Ovary (tissue), 10 donors: ENCODE measurements at regions of chr1 and their contacts with region 1.

Region 1: GRCh38 chr1:31593770-31594632 is 17.7 kb downstream of the TINAGL1 start:
- DNase-seq: peak; percentile 83 to 92 (median 86)
- H3K4me3 ChIP-seq: no peak overlapping the region
- H3K27ac ChIP-seq: no peak overlapping the region
- H3K4me1 ChIP-seq: no peaks in the 10 kb centered on the region
- H3K27me3 ChIP-seq: no peaks in the 10 kb centered on the region
- CTCF ChIP-seq: peak; percentile 70 to 86 (median 78)
- EP300 ChIP-seq: no peak
- POLR2A ChIP-seq: no peak

Region 2: DNA sequence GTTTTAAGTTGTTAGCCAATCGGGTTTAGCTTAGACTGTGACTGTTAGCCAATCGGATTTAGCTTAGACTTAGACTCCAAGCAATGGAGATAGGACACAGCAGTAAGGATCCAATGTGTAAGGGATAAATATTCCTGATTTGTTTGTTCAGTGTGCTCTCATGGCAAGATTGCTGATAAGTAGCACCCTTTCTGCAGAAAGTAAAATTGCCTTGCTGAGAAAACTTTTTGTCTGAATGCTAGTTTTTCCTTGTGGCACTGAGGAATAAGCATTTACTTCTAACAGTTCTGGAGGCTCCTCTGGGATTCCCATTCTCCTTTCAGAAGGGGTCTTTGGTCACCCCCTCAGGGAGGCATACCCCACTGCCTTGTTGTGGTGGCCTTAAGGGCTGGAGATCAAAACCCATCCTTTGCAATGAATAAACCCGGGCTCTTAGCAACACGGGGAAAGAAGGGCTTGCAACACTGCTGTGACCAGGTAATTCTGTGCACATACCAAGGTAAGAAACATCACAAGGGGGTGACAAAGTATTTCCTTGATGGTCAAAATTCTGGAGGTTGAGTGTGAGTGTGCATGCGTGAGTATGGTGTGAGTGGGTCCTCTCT is 135.6 kb before region 1 on chr1:
- intact Hi-C with region 1: no loop called
- DNase-seq: no peak
- H3K4me3 ChIP-seq: no peak overlapping the region
- H3K27ac ChIP-seq: no peak overlapping the region
- H3K4me1 ChIP-seq: no peaks in the 10 kb centered on the region
- H3K27me3 ChIP-seq: no peaks in the 10 kb centered on the region
- CTCF ChIP-seq: no peak
- EP300 ChIP-seq: no peak
- POLR2A ChIP-seq: no peak

Region 3: GRCh38 chr1:31497601-31498000 is 96.4 kb before region 1 on chr1:
- intact Hi-C with region 1: no loop called
- DNase-seq: no peak
- H3K4me3 ChIP-seq: no peak overlapping the region
- H3K27ac ChIP-seq: no peak overlapping the region
- H3K4me1 ChIP-seq: no peaks in the 10 kb centered on the region
- H3K27me3 ChIP-seq: no peaks in the 10 kb centered on the region
- CTCF ChIP-seq: no peak
- EP300 ChIP-seq: no peak
- POLR2A ChIP-seq: no peak

Region 4: GRCh38 chr1:31548907-31549808 is 44.8 kb before region 1 on chr1:
- intact Hi-C with region 1: no loop called
- DNase-seq: peak; percentile 67 to 88 (median 84)
- H3K4me3 ChIP-seq: no peak overlapping the region
- H3K27ac ChIP-seq: no peak overlapping the region
- H3K4me1 ChIP-seq: peaks cover 5% of the 10 kb centered on the region
- H3K27me3 ChIP-seq: no peaks in the 10 kb centered on the region
- CTCF ChIP-seq: peak; percentile 83 to 88 (median 84)
- EP300 ChIP-seq: no peak
- POLR2A ChIP-seq: no peak

Region 5: GRCh38 chr1:31564134-31564989 is 29.6 kb before region 1 on chr1:
- intact Hi-C with region 1: loop called (anchors 1 to 5 kb)
- DNase-seq: peak; percentile 53 to 73 (median 66)
- H3K4me3 ChIP-seq: no peak overlapping the region
- H3K27ac ChIP-seq: no peak overlapping the region
- H3K4me1 ChIP-seq: peaks cover 2% of the 10 kb centered on the region
- H3K27me3 ChIP-seq: no peaks in the 10 kb centered on the region
- CTCF ChIP-seq: peak; percentile 79 to 88 (median 87)
- EP300 ChIP-seq: no peak
- POLR2A ChIP-seq: no peak